A673 (cell line): ENCODE measurements at regions of chr16 and their contacts with region 1.

Region 1: GRCh38 chr16:9047686-9048301 is 43.6 kb upstream of the HAPSTR1 start:
- DNase-seq: peak; percentile 97
- H3K4me3 ChIP-seq: no peak overlapping the region
- H3K27ac ChIP-seq: peak overlapping the region; percentile 85
- H3K4me1 ChIP-seq: peaks cover 12% of the 10 kb centered on the region
- H3K27me3 ChIP-seq: no peaks in the 10 kb centered on the region
- CTCF ChIP-seq: no peak

Region 2: DNA sequence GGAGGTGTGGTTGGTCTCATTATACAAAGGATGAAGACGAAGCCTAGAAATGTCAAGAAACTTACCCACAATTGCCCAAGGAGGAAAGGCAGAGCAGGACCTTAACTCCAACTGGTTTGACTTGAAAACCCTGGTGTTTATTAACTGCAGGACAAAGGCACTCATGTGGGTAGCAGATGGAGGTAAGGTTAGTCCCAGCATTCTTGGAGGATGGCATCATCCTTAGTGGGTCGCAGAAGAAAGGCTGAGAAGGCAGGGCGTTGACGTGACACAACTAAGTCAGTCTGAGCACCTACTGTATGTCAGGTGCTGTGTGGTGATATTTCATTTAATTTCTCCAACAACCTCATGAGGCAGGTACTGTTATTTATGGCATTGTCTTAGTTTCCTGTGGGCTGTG is 145.0 kb after region 1 on chr16:
- CTCF ChIA-PET with region 1: no interaction called
- POLR2A ChIA-PET with region 1: no interaction called
- intact Hi-C with region 1: loop called (anchors 10 kb)
- DNase-seq: no peak
- H3K4me3 ChIP-seq: no peak overlapping the region
- H3K27ac ChIP-seq: no peak overlapping the region
- H3K4me1 ChIP-seq: peaks cover 26% of the 10 kb centered on the region
- H3K27me3 ChIP-seq: no peaks in the 10 kb centered on the region
- CTCF ChIP-seq: no peak